Activated CD4-positive, alpha-beta T cell treated with anti-CD3 and anti-CD28 coated beads for 36 hours (primary cell): ENCODE measurements at regions of chr16 and their contacts with region 1.

Region 1: DNA sequence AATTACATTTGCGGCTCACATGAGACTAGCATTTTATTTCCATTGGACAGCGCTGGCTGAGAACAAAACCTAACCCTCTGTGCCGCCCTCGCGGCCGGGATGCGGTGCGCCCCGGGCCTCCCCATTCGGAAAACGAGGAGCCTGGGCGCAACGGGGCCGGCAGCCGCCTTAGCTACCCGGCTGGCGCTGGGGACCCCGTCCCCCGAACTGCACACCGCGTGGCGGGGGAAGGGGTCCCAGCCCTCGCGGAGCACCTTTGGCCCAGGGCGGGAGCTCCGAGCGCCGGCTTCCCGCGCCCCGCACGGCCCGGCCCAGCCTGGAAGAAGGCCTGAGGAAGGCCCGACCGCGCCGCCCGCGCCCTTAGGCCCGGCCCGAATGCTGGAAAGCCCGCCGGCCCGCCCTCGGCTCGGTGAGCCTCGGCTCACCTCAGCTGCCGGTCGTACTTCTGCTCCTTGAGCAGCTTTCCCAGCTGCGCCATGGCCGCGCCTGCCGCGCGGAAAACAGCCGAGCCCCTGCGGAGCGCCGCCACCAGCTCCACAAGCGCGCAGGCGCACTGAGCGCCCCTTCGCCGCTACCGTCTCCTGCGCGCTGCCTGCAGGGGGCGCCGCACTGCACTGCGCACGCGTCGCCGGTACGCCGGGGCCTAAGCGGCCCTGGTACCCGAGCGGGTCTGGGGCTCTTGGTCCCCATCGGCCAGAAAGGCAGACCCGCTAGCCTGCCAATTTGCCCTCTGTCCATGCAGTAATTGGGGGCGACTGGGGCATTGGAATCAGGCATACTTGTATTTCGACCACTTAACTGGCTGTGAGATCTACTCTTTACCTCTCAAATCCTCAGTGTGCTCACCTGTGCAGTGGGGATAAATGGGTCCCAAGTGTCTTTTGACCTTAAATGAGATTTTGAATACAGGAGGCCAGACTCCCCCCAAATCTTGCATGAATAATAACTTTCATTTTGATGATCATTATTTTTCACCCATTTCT is at the start of gene NAE1:
- DNase-seq: peak; percentile 93
- ATAC-seq: peak; percentile 96
- H3K4me3 Mint-ChIP-seq: peak within 1 kb of the TSS; percentile 73
- H3K27ac Mint-ChIP-seq: peak within 1 kb of the TSS; percentile 67
- H3K4me1 Mint-ChIP-seq: peaks cover 32% of the 10 kb centered on the region
- H3K27me3 Mint-ChIP-seq: peaks cover 2% of the 10 kb centered on the region
- total RNA-seq, gene NAE1: 102 to 125 TPM

Region 2: GRCh38 chr16:66696669-66697630 is 133.8 kb before region 1 on chr16 and contains the start of gene CMTM4:
- CTCF ChIA-PET with region 1: interaction called, 5 read pairs
- POLR2A ChIA-PET with region 1: no interaction called
- intact Hi-C with region 1: loop called in 1 of 2 experiments (anchors 1 kb)
- DNase-seq: peak; percentile 87
- ATAC-seq: peak; percentile 96
- H3K4me3 Mint-ChIP-seq: peak within 1 kb of the TSS; percentile 73
- H3K27ac Mint-ChIP-seq: no peak within 1 kb of the TSS
- H3K4me1 Mint-ChIP-seq: peaks cover 12% of the 10 kb centered on the region
- H3K27me3 Mint-ChIP-seq: peaks cover 10% of the 10 kb centered on the region
- total RNA-seq, gene CMTM4: 3.3 to 4.5 TPM

Region 3: DNA sequence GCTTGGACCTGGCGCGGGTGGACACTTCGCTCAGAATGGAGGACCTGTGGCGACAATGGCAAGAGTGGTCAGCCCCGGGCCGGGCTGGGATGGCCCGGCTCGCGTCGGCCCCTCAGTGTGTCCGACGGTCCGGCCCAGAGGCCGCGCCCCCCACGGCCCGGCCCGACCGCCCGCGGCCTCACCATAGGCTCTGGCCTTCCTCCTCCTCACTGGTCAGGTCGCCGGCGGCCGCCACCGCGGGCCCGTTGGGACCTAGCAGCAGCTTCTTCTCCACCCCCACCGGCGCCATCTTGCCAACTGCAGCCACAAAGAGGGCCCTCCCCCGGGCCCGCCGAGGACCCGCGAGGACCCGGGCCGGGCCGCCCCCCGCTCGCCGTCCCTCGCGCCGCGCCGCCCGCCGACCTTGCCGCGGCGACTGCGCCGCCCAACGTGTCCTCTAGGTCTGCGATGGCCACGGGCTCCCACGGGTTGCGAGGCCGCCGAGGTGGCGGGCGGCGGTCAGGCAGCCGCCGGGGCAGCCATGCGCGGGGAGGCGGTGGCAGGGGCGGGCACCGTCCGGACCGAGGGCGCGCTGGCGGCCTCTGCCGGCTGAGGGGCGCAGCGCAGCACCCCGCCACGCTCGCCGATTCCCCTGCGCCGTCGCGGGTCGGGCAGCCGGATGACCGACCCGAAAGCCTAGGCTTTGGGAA is 79.3 kb before region 1 on chr16 and contains the start of gene DYNC1LI2:
- CTCF ChIA-PET with region 1: interaction called, 18 read pairs
- POLR2A ChIA-PET with region 1: no interaction called
- intact Hi-C with region 1: loop called in 1 of 2 experiments (anchors 1 kb)
- DNase-seq: peak; percentile 89
- ATAC-seq: peak; percentile 93
- H3K4me3 Mint-ChIP-seq: peak within 1 kb of the TSS; percentile 81
- H3K27ac Mint-ChIP-seq: peak within 1 kb of the TSS; percentile 80
- H3K4me1 Mint-ChIP-seq: peaks cover 38% of the 10 kb centered on the region
- H3K27me3 Mint-ChIP-seq: peaks cover 9% of the 10 kb centered on the region
- total RNA-seq, gene DYNC1LI2: 32.3 to 35.7 TPM

Region 4: GRCh38 chr16:66790130-66790733 is 40.5 kb before region 1 on chr16:
- CTCF ChIA-PET with region 1: no interaction called
- POLR2A ChIA-PET with region 1: no interaction called
- intact Hi-C with region 1: no loop called
- DNase-seq: no peak
- ATAC-seq: no peak
- H3K4me3 Mint-ChIP-seq: no peak overlapping the region
- H3K27ac Mint-ChIP-seq: no peak overlapping the region
- H3K4me1 Mint-ChIP-seq: no peaks in the 10 kb centered on the region
- H3K27me3 Mint-ChIP-seq: no peaks in the 10 kb centered on the region

Region 5: GRCh38 chr16:66844342-66845079 is 13.8 kb after region 1 on chr16 and contains the start of gene CA7:
- CTCF ChIA-PET with region 1: interaction called, 30 read pairs
- POLR2A ChIA-PET with region 1: interaction called, 4 read pairs
- intact Hi-C with region 1: no loop called
- DNase-seq: no peak
- ATAC-seq: peak; percentile 33
- H3K4me3 Mint-ChIP-seq: peak within 1 kb of the TSS; percentile 31
- H3K27ac Mint-ChIP-seq: no peak within 1 kb of the TSS
- H3K4me1 Mint-ChIP-seq: peaks cover 7% of the 10 kb centered on the region
- H3K27me3 Mint-ChIP-seq: peaks cover 37% of the 10 kb centered on the region
- total RNA-seq, gene CA7: 0.16 TPM in 1 of 2 experiments, not detected in the other

Region 6: GRCh38 chr16:66880288-66881013 is 49.7 kb after region 1 on chr16 and contains the start of gene PDP2:
- CTCF ChIA-PET with region 1: interaction called, 47 read pairs
- POLR2A ChIA-PET with region 1: no interaction called
- intact Hi-C with region 1: no loop called
- DNase-seq: peak; percentile 95
- ATAC-seq: peak; percentile 90
- H3K4me3 Mint-ChIP-seq: peak within 1 kb of the TSS; percentile 90
- H3K27ac Mint-ChIP-seq: peak within 1 kb of the TSS; percentile 96
- H3K4me1 Mint-ChIP-seq: peaks cover 48% of the 10 kb centered on the region
- H3K27me3 Mint-ChIP-seq: no peaks in the 10 kb centered on the region
- total RNA-seq, gene PDP2: 27.8 to 36.6 TPM

Region 7: GRCh38 chr16:66924527-66925321 is 94.0 kb after region 1 on chr16:
- CTCF ChIA-PET with region 1: interaction called, 12 read pairs
- POLR2A ChIA-PET with region 1: no interaction called
- intact Hi-C with region 1: no loop called
- DNase-seq: peak; percentile 73
- ATAC-seq: peak; percentile 75
- H3K4me3 Mint-ChIP-seq: peak overlapping the region; percentile 38
- H3K27ac Mint-ChIP-seq: no peak overlapping the region
- H3K4me1 Mint-ChIP-seq: peaks cover 7% of the 10 kb centered on the region
- H3K27me3 Mint-ChIP-seq: peaks cover 33% of the 10 kb centered on the region